Heart left ventricle (tissue), 16 donors: ENCODE measurements at regions of chr16 and their contacts with region 1.

Region 1: GRCh38 chr16:29848420-29849297 is 14.4 kb downstream of the CDIPT start:
- DNase-seq: peak; percentile 64 to 90 (median 79)
- ATAC-seq: peak; percentile 60 to 79 (median 78)
- H3K4me3 ChIP-seq: no peak overlapping the region
- H3K27ac ChIP-seq: no peak overlapping the region
- H3K4me1 ChIP-seq: peaks cover 0 to 7% (median 0%) of the 10 kb centered on the region in 12 donors
- H3K27me3 ChIP-seq: no peaks in the 10 kb centered on the region
- CTCF ChIP-seq: peak; percentile 82 to 93 (median 87)
- POLR2A ChIP-seq: no peak

Region 2: DNA sequence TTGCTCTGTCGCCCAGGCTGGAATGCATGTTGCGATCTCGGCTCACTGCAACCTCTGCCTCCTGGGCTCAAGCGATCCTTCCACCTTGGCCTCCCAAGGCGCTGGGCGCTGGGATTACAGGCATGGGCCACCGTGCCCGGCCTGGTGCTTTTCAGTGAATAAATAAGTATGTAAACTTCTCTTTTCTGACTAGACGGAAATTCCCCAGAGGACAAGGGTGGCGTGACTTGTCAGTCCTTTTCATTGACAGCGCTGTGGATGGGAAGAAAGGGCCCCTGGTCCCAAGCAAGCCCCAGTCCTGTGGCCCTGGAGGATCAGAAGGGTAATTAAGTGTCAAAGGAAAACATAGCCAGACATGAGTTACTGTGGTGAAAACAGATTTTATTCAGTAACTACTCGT is 195.2 kb before region 1 on chr16:
- intact Hi-C with region 1: no loop called
- DNase-seq: no peak
- ATAC-seq: no peak
- H3K4me3 ChIP-seq: no peak overlapping the region
- H3K27ac ChIP-seq: peak overlapping the region in 1 of 12 donors; percentile 28
- H3K4me1 ChIP-seq: peaks cover 0 to 9% (median 0%) of the 10 kb centered on the region in 12 donors
- H3K27me3 ChIP-seq: no peaks in the 10 kb centered on the region
- CTCF ChIP-seq: no peak
- POLR2A ChIP-seq: no peak

Region 3: GRCh38 chr16:29694384-29695195 is 154.1 kb before region 1 on chr16:
- intact Hi-C with region 1: loop called in 1 of 10 experiments (anchors 10 kb)
- DNase-seq: no peak
- ATAC-seq: no peak
- H3K4me3 ChIP-seq: no peak overlapping the region
- H3K27ac ChIP-seq: no peak overlapping the region
- H3K4me1 ChIP-seq: no peaks in the 10 kb centered on the region
- H3K27me3 ChIP-seq: no peaks in the 10 kb centered on the region
- CTCF ChIP-seq: no peak
- POLR2A ChIP-seq: no peak

Region 4: GRCh38 chr16:29790183-29790952 is 58.3 kb before region 1 on chr16 and contains the start of gene KIF22:
- intact Hi-C with region 1: loop called in 1 of 10 experiments (anchors 5 kb)
- DNase-seq: peak; percentile 99 to 100 (median 100)
- ATAC-seq: peak; percentile 99
- H3K4me3 ChIP-seq: peak within 1 kb of the TSS; percentile 50 to 94 (median 82)
- H3K27ac ChIP-seq: peak within 1 kb of the TSS; percentile 62 to 94 (median 90)
- H3K4me1 ChIP-seq: peaks cover 0 to 32% (median 17%) of the 10 kb centered on the region in 12 donors
- H3K27me3 ChIP-seq: no peaks in the 10 kb centered on the region
- CTCF ChIP-seq: peak; percentile 57 to 93 (median 68)
- POLR2A ChIP-seq: peak in 1 of 2 donors; percentile 67
- total RNA-seq, gene KIF22: 16.8 to 40.8 (median 32.2) TPM

Region 5: GRCh38 chr16:29804455-29805377 is 43.9 kb before region 1 on chr16:
- intact Hi-C with region 1: no loop called
- DNase-seq: peak in 4 of 5 donors; percentile 60 to 87 (median 68)
- ATAC-seq: peak; percentile 20 to 56 (median 30)
- H3K4me3 ChIP-seq: peak overlapping the region; percentile 65 to 98 (median 83)
- H3K27ac ChIP-seq: peak overlapping the region; percentile 95 to 100 (median 99)
- H3K4me1 ChIP-seq: peaks cover under 1 to 39% (median 34%) of the 10 kb centered on the region in 12 donors
- H3K27me3 ChIP-seq: no peaks in the 10 kb centered on the region
- CTCF ChIP-seq: peak in 2 of 12 donors; percentile 16 to 24
- POLR2A ChIP-seq: no peak

Region 6: GRCh38 chr16:29815793-29816693 is 32.6 kb before region 1 on chr16 and contains the start of gene PAGR1:
- intact Hi-C with region 1: loop called in 4 of 10 experiments (anchors 2 to 5 kb)
- DNase-seq: peak; percentile 97 to 99 (median 99)
- ATAC-seq: peak; percentile 80 to 89 (median 86)
- H3K4me3 ChIP-seq: peak within 1 kb of the TSS; percentile 45 to 91 (median 74)
- H3K27ac ChIP-seq: peak within 1 kb of the TSS; percentile 84 to 97 (median 93)
- H3K4me1 ChIP-seq: peaks cover 3 to 71% (median 51%) of the 10 kb centered on the region in 12 donors
- H3K27me3 ChIP-seq: peaks cover 0 to 4% (median 0%) of the 10 kb centered on the region in 9 donors
- CTCF ChIP-seq: peak; percentile 82 to 98 (median 91)
- POLR2A ChIP-seq: peak in 1 of 2 donors; percentile 60
- total RNA-seq, gene PAGR1: 10.8 to 23.9 (median 12.6) TPM

Region 7: GRCh38 chr16:29831490-29831889 is 17.2 kb before region 1 on chr16:
- intact Hi-C with region 1: no loop called
- DNase-seq: peak in 3 of 5 donors; percentile 38 to 75 (median 74)
- ATAC-seq: peak; percentile 61 to 92 (median 80)
- H3K4me3 ChIP-seq: no peak overlapping the region
- H3K27ac ChIP-seq: no peak overlapping the region
- H3K4me1 ChIP-seq: peaks cover 0 to 18% (median 4%) of the 10 kb centered on the region in 12 donors
- H3K27me3 ChIP-seq: no peaks in the 10 kb centered on the region
- CTCF ChIP-seq: no peak
- POLR2A ChIP-seq: no peak

Region 8: GRCh38 chr16:29900102-29900887 is 51.6 kb after region 1 on chr16 and contains the start of gene ASPHD1:
- intact Hi-C with region 1: no loop called
- DNase-seq: peak; percentile 60 to 85 (median 71)
- ATAC-seq: peak; percentile 49 to 90 (median 82)
- H3K4me3 ChIP-seq: peak within 1 kb of the TSS; percentile 38 to 77 (median 60)
- H3K27ac ChIP-seq: peak within 1 kb of the TSS in 3 of 12 donors; percentile 16 to 37 (median 30)
- H3K4me1 ChIP-seq: peaks cover 0 to 23% (median 7%) of the 10 kb centered on the region in 12 donors
- H3K27me3 ChIP-seq: peaks cover 6 to 30% (median 19%) of the 10 kb centered on the region in 9 donors
- CTCF ChIP-seq: no peak
- POLR2A ChIP-seq: no peak
- total RNA-seq, gene ASPHD1: 0.20 to 5.3 (median 0.65) TPM in 6 of 9 donors, not detected in the others

Region 9: GRCh38 chr16:29915590-29916247 is 67.1 kb after region 1 on chr16:
- intact Hi-C with region 1: loop called in 1 of 10 experiments (anchors 10 kb)
- DNase-seq: no peak
- ATAC-seq: no peak
- H3K4me3 ChIP-seq: no peak overlapping the region
- H3K27ac ChIP-seq: no peak overlapping the region
- H3K4me1 ChIP-seq: no peaks in the 10 kb centered on the region
- H3K27me3 ChIP-seq: no peaks in the 10 kb centered on the region
- CTCF ChIP-seq: no peak
- POLR2A ChIP-seq: no peak